ENCODE measurements at regions of chr2 and their contacts with region 1.

Region 1: DNA sequence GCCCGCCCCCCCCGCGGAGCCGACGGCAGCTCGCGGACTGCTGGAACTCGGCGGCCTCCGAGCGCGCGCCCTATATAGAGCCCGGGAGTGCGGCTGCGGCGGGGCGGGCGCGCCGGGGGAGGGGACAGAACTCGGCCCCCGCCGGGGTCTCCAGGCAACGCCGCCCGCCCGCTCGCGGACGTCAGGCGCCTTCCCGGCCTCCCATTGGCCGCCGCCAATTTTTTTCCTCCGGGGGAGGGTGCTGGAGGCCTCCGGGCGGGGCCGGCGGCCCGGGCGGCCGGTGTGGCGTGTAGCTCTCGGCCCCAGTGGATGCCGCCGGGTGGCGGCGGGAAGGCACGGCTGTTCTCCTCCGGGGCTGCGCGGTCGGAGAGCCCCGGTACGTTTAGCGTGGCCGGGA is at the start of gene ZFP36L2:
- DNase-seq: peak; percentile 97 to 99
- ATAC-seq: peak; percentile 75 to 81 (median 77)
- H3K4me3 ChIP-seq: peak within 1 kb of the TSS; percentile 75
- H3K27ac ChIP-seq: peak within 1 kb of the TSS; percentile 91
- H3K4me1 ChIP-seq: peaks cover 36% of the 10 kb centered on the region
- H3K27me3 ChIP-seq: no peaks in the 10 kb centered on the region
- CTCF ChIP-seq: no peak
- total RNA-seq, gene ZFP36L2: 48.9 to 103 (median 71.4) TPM

Region 2: DNA sequence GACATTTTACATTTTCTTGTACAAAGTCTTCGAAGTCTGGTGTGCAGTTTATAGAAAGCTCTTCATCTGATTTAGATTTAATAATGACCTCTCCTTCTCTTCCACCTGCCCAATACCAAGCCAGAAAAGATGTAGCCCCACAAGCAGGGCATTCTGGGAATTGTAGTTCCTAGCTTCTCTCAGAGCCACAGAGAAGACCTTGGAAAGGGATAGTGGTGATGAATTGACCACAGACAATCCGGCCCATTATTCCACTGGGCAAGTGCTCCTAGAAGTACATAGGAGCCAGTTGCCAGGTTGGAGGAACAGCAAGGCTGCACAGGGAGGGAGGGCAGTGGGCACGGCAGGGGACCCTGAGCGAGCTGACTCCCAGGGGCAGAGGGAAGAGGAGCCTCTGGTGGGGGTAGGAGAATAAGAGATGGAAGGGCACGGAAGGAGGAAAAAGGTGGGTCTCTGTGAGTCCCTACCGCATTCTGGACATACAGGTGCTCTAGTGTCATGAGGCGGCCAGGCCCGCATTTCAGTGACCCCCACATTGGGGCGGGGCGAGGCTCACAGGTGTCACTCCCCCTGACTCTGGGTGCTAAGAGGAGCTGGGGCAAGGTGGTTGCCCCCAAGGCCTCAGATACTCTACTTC is 281.7 kb before region 1 on chr2:
- intact Hi-C with region 1: loop called in 1 of 2 experiments (anchors 1 kb)
- DNase-seq: no peak
- ATAC-seq: no peak
- H3K4me3 ChIP-seq: no peak overlapping the region
- H3K27ac ChIP-seq: no peak overlapping the region
- H3K4me1 ChIP-seq: peaks cover 7% of the 10 kb centered on the region
- H3K27me3 ChIP-seq: no peaks in the 10 kb centered on the region
- CTCF ChIP-seq: no peak

Region 3: DNA sequence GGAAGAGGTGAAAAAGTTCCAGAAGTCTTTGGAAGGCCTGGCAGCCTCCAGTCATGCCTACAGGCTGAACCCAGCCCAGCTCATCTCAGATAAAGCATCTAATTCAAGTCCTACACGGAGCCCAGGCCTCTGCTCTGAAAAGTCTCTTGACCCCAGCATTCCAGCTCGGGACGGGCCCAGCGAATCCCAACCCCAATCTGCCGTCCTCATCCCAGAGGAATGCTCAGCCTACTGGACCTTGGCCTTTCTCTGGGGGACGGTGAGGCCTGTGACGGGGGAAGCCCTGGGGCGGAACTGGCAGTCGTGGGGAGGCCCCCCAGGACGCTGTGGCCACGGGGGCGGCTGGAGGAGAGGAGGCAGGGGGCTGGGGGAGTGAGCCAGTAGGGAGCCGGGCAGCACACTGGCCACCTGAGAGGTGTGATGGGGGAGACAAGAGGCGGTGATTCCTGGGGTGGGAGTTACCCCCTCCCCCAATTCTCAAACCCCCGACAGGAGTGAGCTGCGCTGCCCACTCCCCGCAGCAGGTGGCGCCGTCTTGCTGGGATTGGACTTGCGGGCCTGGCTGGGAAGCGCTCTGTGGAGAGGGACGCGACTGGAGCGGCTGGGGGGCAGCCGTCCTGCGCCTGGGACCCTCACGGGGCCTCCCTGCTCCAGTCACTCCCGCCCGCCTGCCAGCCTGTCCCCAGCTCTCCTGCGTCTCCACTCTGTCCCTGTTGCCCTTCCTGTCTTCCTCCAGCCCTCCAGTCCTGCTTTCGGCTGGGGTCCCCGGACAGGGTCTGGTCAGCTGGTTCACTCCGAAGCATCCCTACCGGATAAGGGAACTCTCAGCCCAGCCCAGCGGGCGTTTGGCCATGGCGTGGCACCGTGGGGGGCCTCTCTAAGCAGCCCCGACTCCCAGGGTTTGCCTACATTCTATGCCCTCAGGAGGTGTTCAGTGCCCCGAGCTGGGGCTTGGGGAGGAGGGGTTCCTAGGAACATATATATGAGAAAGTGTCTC is 251.5 kb before region 1 on chr2:
- intact Hi-C with region 1: loop called (anchors 1 to 2 kb)
- DNase-seq: peak; percentile 83 to 90
- ATAC-seq: peak; percentile 90 to 96 (median 92)
- H3K4me3 ChIP-seq: peak overlapping the region; percentile 57
- H3K27ac ChIP-seq: no peak overlapping the region
- H3K4me1 ChIP-seq: peaks cover 4% of the 10 kb centered on the region
- H3K27me3 ChIP-seq: no peaks in the 10 kb centered on the region
- CTCF ChIP-seq: peak; percentile 89

Region 4: GRCh38 chr2:43131024-43131889 is 95.3 kb before region 1 on chr2:
- intact Hi-C with region 1: loop called (anchors 2 to 5 kb)
- DNase-seq: peak; percentile 77 to 84
- ATAC-seq: peak; percentile 77 to 84 (median 82)
- H3K4me3 ChIP-seq: no peak overlapping the region
- H3K27ac ChIP-seq: peak overlapping the region; percentile 72
- H3K4me1 ChIP-seq: peaks cover 28% of the 10 kb centered on the region
- H3K27me3 ChIP-seq: no peaks in the 10 kb centered on the region
- CTCF ChIP-seq: peak; percentile 38

Region 5: DNA sequence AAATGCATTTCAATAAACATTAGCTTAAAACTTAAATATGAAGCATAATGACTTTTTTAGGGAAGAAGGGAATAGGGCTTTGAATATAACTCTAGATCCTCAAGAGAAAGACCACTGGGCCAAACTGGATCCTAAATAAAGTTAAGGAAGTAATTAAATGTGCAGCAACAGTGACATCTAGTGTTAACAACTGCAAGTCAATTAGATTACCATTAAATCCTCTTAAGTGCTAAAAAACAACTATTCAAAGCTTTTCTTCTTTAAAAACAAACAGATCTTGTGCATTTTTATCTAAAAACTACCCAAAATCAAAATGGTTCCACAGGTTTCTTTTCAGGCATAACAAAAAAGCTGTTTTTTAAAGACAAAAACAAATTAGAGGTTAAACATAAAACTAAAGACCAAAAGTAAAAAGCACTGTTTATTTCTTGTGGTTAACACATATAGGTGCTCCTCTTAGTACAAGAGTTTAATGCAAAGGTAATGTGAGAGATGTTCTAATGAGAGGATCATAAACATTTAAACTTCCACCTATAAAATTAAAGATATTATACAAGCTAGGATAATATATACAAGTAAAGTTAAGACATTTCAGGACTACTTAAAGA is 257.9 kb after region 1 on chr2:
- intact Hi-C with region 1: loop called (anchors 2 to 5 kb)
- DNase-seq: no peak
- ATAC-seq: peak; percentile 65 to 80 (median 70)
- H3K4me3 ChIP-seq: no peak overlapping the region
- H3K27ac ChIP-seq: peak overlapping the region; percentile 47
- H3K4me1 ChIP-seq: peaks cover 32% of the 10 kb centered on the region
- H3K27me3 ChIP-seq: no peaks in the 10 kb centered on the region
- CTCF ChIP-seq: peak; percentile 73

Measured in psoas muscle (tissue), 8 donors.